ENCODE measurements at regions of chr3 and their contacts with region 1.

Region 1: GRCh38 chr3:119891944-119892721 is 110.2 kb downstream of the NR1I2 start:
- DNase-seq: peak; percentile 70
- ATAC-seq: peak; percentile 41
- H3K4me3 ChIP-seq: no peak overlapping the region
- H3K4me3 Mint-ChIP-seq: no peak overlapping the region
- H3K27ac ChIP-seq: no peak overlapping the region
- H3K27ac Mint-ChIP-seq: no peak overlapping the region
- H3K4me1 ChIP-seq: no peaks in the 10 kb centered on the region
- H3K4me1 Mint-ChIP-seq: peaks cover 4% of the 10 kb centered on the region
- H3K27me3 ChIP-seq: no peaks in the 10 kb centered on the region
- H3K27me3 Mint-ChIP-seq: no peaks in the 10 kb centered on the region
- CTCF ChIP-seq: peak; percentile 86

Region 2: DNA sequence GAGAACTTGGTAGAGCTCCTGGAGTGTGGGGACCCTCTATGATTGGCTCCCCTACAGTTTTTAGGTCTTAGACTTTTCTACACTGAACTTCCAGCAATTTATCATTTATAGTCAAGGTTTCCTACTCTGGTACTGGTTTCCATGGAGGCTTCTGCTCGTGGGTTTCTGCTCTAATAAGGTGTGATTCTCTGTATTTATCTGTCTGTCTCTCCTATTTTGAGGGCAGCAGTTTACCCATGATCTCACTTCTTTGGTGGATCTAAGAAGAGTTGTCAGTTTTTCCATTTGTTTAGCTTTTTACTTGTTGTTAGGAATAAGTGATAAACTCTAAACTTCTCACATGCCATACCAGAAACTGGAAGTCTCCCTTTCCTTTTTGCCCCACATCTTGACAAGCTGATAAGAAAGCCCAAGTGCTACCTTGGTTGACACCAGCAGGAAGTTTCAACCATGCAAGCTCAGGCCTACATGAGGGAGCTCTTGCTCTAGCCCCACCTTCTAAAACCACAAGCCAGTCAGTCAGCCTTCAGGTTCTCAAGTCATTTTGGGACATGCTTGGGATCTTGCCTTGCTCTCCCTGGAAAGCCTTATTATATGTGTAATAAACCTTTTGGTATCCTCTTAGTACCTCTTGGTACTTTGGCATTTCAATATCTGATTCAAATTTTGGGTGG is 383.8 kb before region 1 on chr3:
- CTCF ChIA-PET with region 1: no interaction called
- POLR2A ChIA-PET with region 1: no interaction called
- intact Hi-C with region 1: no loop called
- DNase-seq: no peak
- ATAC-seq: no peak
- H3K4me3 ChIP-seq: no peak overlapping the region
- H3K4me3 Mint-ChIP-seq: no peak overlapping the region
- H3K27ac ChIP-seq: no peak overlapping the region
- H3K27ac Mint-ChIP-seq: no peak overlapping the region
- H3K4me1 ChIP-seq: no peaks in the 10 kb centered on the region
- H3K4me1 Mint-ChIP-seq: peaks cover 11% of the 10 kb centered on the region
- H3K27me3 ChIP-seq: no peaks in the 10 kb centered on the region
- H3K27me3 Mint-ChIP-seq: no peaks in the 10 kb centered on the region
- CTCF ChIP-seq: no peak

Region 3: DNA sequence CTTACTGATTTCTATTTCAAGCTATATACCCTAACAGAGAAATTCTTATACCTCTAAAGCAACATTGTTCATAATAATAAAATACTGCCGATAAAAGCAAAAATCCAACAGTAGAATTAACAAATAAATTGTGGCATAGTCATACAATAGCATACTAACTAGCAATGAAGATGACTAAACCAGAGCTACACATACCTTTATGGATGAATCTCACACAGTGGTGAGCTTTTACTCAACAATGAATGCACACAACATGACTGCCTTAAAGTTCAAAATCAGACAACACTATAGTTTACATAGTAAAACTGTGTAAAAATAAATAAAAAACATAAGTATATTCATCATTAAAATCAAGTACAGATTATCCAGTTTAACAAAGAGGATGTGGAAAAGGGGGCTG is 11.2 kb before region 1 on chr3:
- CTCF ChIA-PET with region 1: interaction called, 11 read pairs
- POLR2A ChIA-PET with region 1: no interaction called
- intact Hi-C with region 1: no loop called
- DNase-seq: no peak
- ATAC-seq: no peak
- H3K4me3 ChIP-seq: no peak overlapping the region
- H3K4me3 Mint-ChIP-seq: no peak overlapping the region
- H3K27ac ChIP-seq: no peak overlapping the region
- H3K27ac Mint-ChIP-seq: no peak overlapping the region
- H3K4me1 ChIP-seq: no peaks in the 10 kb centered on the region
- H3K4me1 Mint-ChIP-seq: no peaks in the 10 kb centered on the region
- H3K27me3 ChIP-seq: no peaks in the 10 kb centered on the region
- H3K27me3 Mint-ChIP-seq: no peaks in the 10 kb centered on the region
- CTCF ChIP-seq: no peak

Region 4: GRCh38 chr3:120182724-120183524 is 290.8 kb after region 1 on chr3:
- CTCF ChIA-PET with region 1: interaction called, 9 read pairs
- POLR2A ChIA-PET with region 1: no interaction called
- intact Hi-C with region 1: loop called (anchors 1 kb)
- DNase-seq: peak; percentile 9
- ATAC-seq: no peak
- H3K4me3 ChIP-seq: no peak overlapping the region
- H3K4me3 Mint-ChIP-seq: no peak overlapping the region
- H3K27ac ChIP-seq: no peak overlapping the region
- H3K27ac Mint-ChIP-seq: no peak overlapping the region
- H3K4me1 ChIP-seq: no peaks in the 10 kb centered on the region
- H3K4me1 Mint-ChIP-seq: no peaks in the 10 kb centered on the region
- H3K27me3 ChIP-seq: no peaks in the 10 kb centered on the region
- H3K27me3 Mint-ChIP-seq: peaks cover 28% of the 10 kb centered on the region
- CTCF ChIP-seq: peak; percentile 18

Region 5: DNA sequence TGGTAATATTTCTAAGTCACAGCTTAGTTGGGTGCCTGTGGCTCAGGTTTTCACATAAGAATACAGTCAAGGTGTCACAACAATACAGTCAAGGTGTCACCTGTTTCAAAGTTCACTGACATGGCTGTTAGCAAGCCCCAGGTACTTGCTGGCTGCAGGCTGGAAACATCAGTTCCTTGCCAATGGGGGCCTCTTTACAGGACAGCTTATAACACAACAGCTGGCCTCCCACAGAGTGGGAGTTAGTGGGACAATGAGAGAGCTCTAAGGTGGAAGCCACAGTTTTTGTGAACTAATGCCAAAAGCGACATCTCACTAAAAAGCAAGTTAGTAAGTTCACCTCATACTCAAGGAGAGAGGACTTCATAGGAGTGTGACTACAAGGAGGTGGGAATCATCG is 347.5 kb after region 1 on chr3:
- CTCF ChIA-PET with region 1: interaction called, 10 read pairs
- POLR2A ChIA-PET with region 1: no interaction called
- intact Hi-C with region 1: loop called (anchors 5 kb)
- DNase-seq: no peak
- ATAC-seq: no peak
- H3K4me3 ChIP-seq: no peak overlapping the region
- H3K4me3 Mint-ChIP-seq: no peak overlapping the region
- H3K27ac ChIP-seq: no peak overlapping the region
- H3K27ac Mint-ChIP-seq: no peak overlapping the region
- H3K4me1 ChIP-seq: no peaks in the 10 kb centered on the region
- H3K4me1 Mint-ChIP-seq: no peaks in the 10 kb centered on the region
- H3K27me3 ChIP-seq: peaks cover 0 to 16% (median 5%) of the 10 kb centered on the region in 4 experiments
- H3K27me3 Mint-ChIP-seq: peaks cover 70% of the 10 kb centered on the region
- CTCF ChIP-seq: no peak

Region 6: GRCh38 chr3:120417272-120417911 is 525.3 kb after region 1 on chr3:
- CTCF ChIA-PET with region 1: interaction called, 24 read pairs
- POLR2A ChIA-PET with region 1: no interaction called
- intact Hi-C with region 1: loop called (anchors 1 kb)
- DNase-seq: peak; percentile 92
- ATAC-seq: peak; percentile 100
- H3K4me3 ChIP-seq: peak overlapping the region; percentile 39 to 76 (median 54)
- H3K4me3 Mint-ChIP-seq: peak overlapping the region; percentile 82
- H3K27ac ChIP-seq: no peak overlapping the region
- H3K27ac Mint-ChIP-seq: peak overlapping the region; percentile 2
- H3K4me1 ChIP-seq: peaks cover 7 to 14% of the 10 kb centered on the region in 2 donors
- H3K4me1 Mint-ChIP-seq: peaks cover 21% of the 10 kb centered on the region
- H3K27me3 ChIP-seq: no peaks in the 10 kb centered on the region
- H3K27me3 Mint-ChIP-seq: no peaks in the 10 kb centered on the region
- CTCF ChIP-seq: peak; percentile 86

Region 7: GRCh38 chr3:120558771-120559241 is 666.7 kb after region 1 on chr3:
- CTCF ChIA-PET with region 1: interaction called, 26 read pairs
- POLR2A ChIA-PET with region 1: no interaction called
- intact Hi-C with region 1: loop called (anchors 1 kb)
- DNase-seq: peak; percentile 94
- ATAC-seq: peak; percentile 87
- H3K4me3 ChIP-seq: peak overlapping the region; percentile 24 to 69 (median 55)
- H3K4me3 Mint-ChIP-seq: peak overlapping the region; percentile 89
- H3K27ac ChIP-seq: peak overlapping the region in 1 of 2 donors; percentile 60
- H3K27ac Mint-ChIP-seq: peak overlapping the region; percentile 83
- H3K4me1 ChIP-seq: peaks cover 12 to 15% of the 10 kb centered on the region in 2 donors
- H3K4me1 Mint-ChIP-seq: peaks cover 19% of the 10 kb centered on the region
- H3K27me3 ChIP-seq: peaks cover 0 to 14% (median 9%) of the 10 kb centered on the region in 4 experiments
- H3K27me3 Mint-ChIP-seq: peaks cover 18% of the 10 kb centered on the region
- CTCF ChIP-seq: peak; percentile 96

Measured in B cell (primary cell).